Activated CD8-positive, alpha-beta T cell treated with anti-CD3 and anti-CD28 coated beads for 36 hours (primary cell): ENCODE measurements at regions of chr2 and their contacts with region 1.

Region 1: DNA sequence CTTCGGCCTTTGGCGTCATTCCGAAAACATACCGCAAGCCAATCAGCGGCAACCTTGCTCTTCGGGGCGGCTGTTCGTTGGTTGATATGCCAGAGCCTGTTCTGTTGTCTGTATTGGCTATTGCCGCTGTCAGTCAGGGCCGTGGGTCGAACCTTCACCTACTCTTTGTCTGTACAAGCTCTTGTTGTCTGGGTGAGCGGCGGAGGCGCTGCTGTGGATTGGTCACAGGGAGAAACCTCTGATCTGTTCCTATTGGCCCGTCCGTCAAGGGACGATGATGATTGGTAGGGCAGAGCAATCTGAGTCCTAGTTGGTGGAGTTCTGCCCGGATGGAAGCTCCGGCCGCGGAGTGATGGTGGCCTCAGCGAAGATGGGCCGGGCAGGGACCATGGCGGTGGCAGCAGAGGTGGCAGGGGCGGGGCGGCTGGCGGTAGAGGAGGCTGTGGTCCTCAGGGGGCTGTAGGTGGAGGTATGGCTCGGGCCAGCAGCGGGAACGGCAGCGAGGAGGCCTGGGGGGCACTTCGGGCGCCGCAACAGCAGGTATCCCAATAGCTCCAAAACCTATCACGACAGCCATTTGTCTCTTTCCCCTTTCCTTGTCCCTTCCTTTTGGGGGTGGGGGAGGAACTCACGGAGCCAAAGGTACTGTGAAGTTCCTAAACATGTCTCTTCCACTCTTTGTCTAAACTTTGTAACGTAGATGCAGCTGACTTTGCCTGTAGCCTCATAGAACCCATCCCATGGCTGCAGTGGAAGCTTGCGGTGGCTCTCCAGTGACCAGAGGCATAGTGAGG is at the start of gene WBP1:
- DNase-seq: peak; percentile 100
- ATAC-seq: peak; percentile 84
- H3K4me3 Mint-ChIP-seq: peak within 1 kb of the TSS; percentile 98
- H3K27ac Mint-ChIP-seq: peak within 1 kb of the TSS; percentile 99
- H3K4me1 Mint-ChIP-seq: peaks cover 42% of the 10 kb centered on the region
- H3K27me3 Mint-ChIP-seq: no peaks in the 10 kb centered on the region
- CTCF ChIP-seq: no peak
- total RNA-seq, gene WBP1: 20.3 to 23.0 TPM

Region 2: GRCh38 chr2:74181739-74182138 is 276.6 kb before region 1 on chr2:
- CTCF ChIA-PET with region 1: no interaction called
- POLR2A ChIA-PET with region 1: no interaction called
- intact Hi-C with region 1: no loop called
- DNase-seq: no peak
- ATAC-seq: no peak
- H3K4me3 Mint-ChIP-seq: no peak overlapping the region
- H3K27ac Mint-ChIP-seq: peak overlapping the region; percentile 30
- H3K4me1 Mint-ChIP-seq: peaks cover 24% of the 10 kb centered on the region
- H3K27me3 Mint-ChIP-seq: no peaks in the 10 kb centered on the region
- CTCF ChIP-seq: no peak

Region 3: GRCh38 chr2:74367789-74368188 is 90.5 kb before region 1 on chr2:
- CTCF ChIA-PET with region 1: no interaction called
- POLR2A ChIA-PET with region 1: no interaction called
- intact Hi-C with region 1: no loop called
- DNase-seq: no peak
- ATAC-seq: no peak
- H3K4me3 Mint-ChIP-seq: no peak overlapping the region
- H3K27ac Mint-ChIP-seq: no peak overlapping the region
- H3K4me1 Mint-ChIP-seq: no peaks in the 10 kb centered on the region
- H3K27me3 Mint-ChIP-seq: no peaks in the 10 kb centered on the region
- CTCF ChIP-seq: no peak

Region 4: DNA sequence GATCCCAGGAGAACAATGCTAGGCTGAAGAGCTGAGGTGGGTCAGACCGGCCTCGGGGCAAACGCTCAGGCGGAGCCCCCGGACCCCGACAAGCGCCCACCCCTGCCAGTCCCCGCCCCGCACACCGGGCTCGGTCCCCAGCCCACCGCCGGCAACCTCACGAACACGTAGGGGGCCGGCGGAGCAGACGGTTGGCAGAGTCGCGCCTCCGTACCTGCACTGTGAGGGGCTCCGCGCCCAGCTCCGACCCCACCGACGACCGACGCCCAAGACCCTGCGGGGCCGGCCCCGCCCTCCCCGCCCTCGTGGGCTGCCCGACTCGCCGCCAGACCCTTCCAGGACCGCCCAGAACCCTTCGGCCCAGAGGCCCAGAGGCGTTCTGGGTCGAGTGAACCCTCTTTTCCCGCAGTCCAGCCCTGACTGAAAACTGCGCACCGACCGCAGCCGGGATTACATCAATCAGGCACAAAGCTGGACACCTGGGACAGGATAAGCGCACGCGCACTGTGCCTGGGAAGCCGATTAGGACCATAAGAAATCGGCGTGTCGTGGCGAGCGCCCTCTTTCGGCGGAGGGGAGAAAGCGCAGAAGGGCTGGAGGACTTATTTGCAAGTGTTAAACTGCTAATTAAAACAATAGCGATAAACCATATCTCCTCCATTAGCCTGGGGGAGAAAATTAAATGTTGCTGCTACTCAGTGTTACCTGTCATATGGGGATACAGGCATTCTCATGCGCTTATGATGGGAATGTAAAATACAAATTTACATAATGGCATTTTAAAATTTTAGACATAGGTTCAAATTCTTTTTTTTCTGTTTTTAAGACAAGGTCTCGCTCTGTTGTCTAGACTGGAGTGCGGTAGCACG is 66.5 kb before region 1 on chr2:
- CTCF ChIA-PET with region 1: interaction called, 15 read pairs
- POLR2A ChIA-PET with region 1: interaction called, 7 read pairs
- intact Hi-C with region 1: no loop called
- DNase-seq: peak; percentile 95
- ATAC-seq: peak; percentile 92
- H3K4me3 Mint-ChIP-seq: peak overlapping the region; percentile 86
- H3K27ac Mint-ChIP-seq: peak overlapping the region; percentile 99
- H3K4me1 Mint-ChIP-seq: peaks cover 2% of the 10 kb centered on the region
- H3K27me3 Mint-ChIP-seq: no peaks in the 10 kb centered on the region
- CTCF ChIP-seq: peak; percentile 96

Region 5: DNA sequence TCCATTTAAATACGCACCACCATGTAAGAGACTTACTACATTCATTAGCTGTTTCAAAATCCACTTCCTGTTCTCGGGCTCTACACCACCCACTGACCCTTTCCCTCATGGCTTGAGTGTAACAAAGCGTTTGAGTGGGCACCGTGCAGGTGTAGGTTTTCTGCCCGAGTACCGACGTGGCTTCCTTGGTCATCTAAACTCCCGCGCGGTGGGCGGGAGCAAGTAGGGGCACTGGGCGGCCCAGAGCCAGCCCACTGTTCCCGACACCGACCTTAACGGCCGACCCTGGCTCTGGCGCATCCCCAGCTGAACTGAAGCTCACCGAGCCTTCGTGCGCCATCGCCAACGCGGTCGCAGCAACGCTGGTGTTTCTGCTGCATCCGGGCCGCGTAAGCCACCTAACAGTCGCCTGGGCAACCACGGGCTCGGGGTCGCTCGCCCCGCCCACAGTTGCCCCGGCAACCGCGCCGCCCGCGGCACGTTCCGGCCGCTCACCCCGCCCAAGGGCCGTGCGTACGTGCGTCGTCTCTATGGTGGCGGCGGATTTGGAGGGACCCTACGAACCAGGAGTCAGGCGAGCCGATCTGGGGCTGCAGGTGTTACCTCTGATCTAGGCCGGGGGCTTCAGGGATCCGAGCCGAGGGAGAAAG is 37.0 kb before region 1 on chr2 and contains the starts of genes C2orf81 and WDR54:
- CTCF ChIA-PET with region 1: interaction called, 6 read pairs
- POLR2A ChIA-PET with region 1: interaction called, 25 read pairs
- intact Hi-C with region 1: no loop called
- DNase-seq: peak; percentile 97
- ATAC-seq: peak; percentile 94
- H3K4me3 Mint-ChIP-seq: peak within 1 kb of the TSS; percentile 97
- H3K27ac Mint-ChIP-seq: peak within 1 kb of the TSS; percentile 97
- H3K4me1 Mint-ChIP-seq: peaks cover 18% of the 10 kb centered on the region
- H3K27me3 Mint-ChIP-seq: no peaks in the 10 kb centered on the region
- CTCF ChIP-seq: no peak
- total RNA-seq, gene C2orf81: 2.6 to 3.9 TPM
- total RNA-seq, gene WDR54: 129 to 132 TPM

Region 6: GRCh38 chr2:74472086-74472944 is 14.0 kb after region 1 on chr2 and contains the start of gene MRPL53:
- CTCF ChIA-PET with region 1: interaction called, 10 read pairs
- POLR2A ChIA-PET with region 1: interaction called, 25 read pairs
- intact Hi-C with region 1: loop called (anchors 2 kb)
- DNase-seq: peak; percentile 96
- ATAC-seq: peak; percentile 92
- H3K4me3 Mint-ChIP-seq: peak within 1 kb of the TSS; percentile 95
- H3K27ac Mint-ChIP-seq: peak within 1 kb of the TSS; percentile 93
- H3K4me1 Mint-ChIP-seq: peaks cover 16% of the 10 kb centered on the region
- H3K27me3 Mint-ChIP-seq: no peaks in the 10 kb centered on the region
- CTCF ChIP-seq: no peak
- total RNA-seq, gene MRPL53: 111 to 113 TPM

Region 7: DNA sequence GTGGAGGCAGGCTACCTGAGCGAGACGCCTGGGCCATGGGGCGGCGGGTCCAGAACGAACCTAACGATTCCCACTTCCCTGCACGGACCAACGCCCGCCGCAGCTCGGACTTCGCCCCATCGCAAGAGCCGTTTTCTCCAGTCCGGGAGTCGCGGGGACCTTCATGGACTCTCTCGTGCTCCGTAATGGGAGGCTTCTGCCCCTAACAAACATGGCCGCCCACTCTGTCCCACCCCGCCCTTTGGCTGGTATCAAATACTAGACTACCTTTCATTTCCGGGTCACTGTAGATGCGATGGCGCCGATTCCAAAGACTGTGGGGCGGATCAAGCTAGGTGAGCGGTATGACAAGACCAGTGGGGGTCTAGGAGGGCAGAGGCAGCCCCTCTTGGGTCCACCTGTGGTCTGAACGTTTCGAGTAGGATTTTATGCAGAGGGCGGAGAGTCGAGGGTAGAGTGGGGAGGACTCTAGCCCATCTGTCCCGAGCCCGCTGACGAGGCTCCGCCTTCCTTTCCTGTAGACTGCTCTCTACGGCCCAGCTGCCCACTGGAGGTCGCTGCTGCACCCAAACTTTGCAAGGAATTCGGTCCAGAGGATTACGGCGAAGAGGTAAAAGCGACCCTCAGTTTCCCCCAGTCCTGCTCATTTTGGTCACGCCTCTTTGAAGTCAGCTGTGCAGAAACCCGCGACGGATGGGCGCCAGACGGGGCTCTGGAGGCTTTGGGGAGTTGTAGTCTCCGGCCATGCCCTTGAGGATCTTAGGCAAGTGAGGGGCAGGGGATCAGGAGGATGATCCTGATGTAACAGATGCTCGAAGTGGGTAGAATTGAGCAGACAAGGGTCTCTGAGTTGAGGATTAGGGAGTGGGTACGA is 24.7 kb after region 1 on chr2 and contains the starts of genes CCDC142 and TTC31:
- CTCF ChIA-PET with region 1: interaction called, 40 read pairs
- POLR2A ChIA-PET with region 1: interaction called, 48 read pairs
- intact Hi-C with region 1: loop called (anchors 2 kb)
- DNase-seq: peak; percentile 98
- ATAC-seq: peak; percentile 93
- H3K4me3 Mint-ChIP-seq: peak within 1 kb of the TSS; percentile 86
- H3K27ac Mint-ChIP-seq: peak within 1 kb of the TSS; percentile 100
- H3K4me1 Mint-ChIP-seq: peaks cover 25% of the 10 kb centered on the region
- H3K27me3 Mint-ChIP-seq: no peaks in the 10 kb centered on the region
- CTCF ChIP-seq: peak; percentile 83
- total RNA-seq, gene CCDC142: 7.2 to 10.3 TPM
- total RNA-seq, gene TTC31: 20.3 to 21.9 TPM

Region 8: GRCh38 chr2:74498500-74499266 is 40.4 kb after region 1 on chr2:
- CTCF ChIA-PET with region 1: interaction called, 3 read pairs
- POLR2A ChIA-PET with region 1: interaction called, 10 read pairs
- intact Hi-C with region 1: no loop called
- DNase-seq: peak; percentile 59
- ATAC-seq: peak; percentile 67
- H3K4me3 Mint-ChIP-seq: peak overlapping the region; percentile 78
- H3K27ac Mint-ChIP-seq: peak overlapping the region; percentile 63
- H3K4me1 Mint-ChIP-seq: peaks cover 28% of the 10 kb centered on the region
- H3K27me3 Mint-ChIP-seq: peaks cover 46% of the 10 kb centered on the region
- CTCF ChIP-seq: no peak